GM18951 (cell line): ENCODE measurements at regions of chr1 and their contacts with region 1.

Region 1: GRCh38 chr1:115717541-115717940 is 51.0 kb downstream of the CASQ2 start:
- POLR2A ChIP-seq: no peak

Region 2: DNA sequence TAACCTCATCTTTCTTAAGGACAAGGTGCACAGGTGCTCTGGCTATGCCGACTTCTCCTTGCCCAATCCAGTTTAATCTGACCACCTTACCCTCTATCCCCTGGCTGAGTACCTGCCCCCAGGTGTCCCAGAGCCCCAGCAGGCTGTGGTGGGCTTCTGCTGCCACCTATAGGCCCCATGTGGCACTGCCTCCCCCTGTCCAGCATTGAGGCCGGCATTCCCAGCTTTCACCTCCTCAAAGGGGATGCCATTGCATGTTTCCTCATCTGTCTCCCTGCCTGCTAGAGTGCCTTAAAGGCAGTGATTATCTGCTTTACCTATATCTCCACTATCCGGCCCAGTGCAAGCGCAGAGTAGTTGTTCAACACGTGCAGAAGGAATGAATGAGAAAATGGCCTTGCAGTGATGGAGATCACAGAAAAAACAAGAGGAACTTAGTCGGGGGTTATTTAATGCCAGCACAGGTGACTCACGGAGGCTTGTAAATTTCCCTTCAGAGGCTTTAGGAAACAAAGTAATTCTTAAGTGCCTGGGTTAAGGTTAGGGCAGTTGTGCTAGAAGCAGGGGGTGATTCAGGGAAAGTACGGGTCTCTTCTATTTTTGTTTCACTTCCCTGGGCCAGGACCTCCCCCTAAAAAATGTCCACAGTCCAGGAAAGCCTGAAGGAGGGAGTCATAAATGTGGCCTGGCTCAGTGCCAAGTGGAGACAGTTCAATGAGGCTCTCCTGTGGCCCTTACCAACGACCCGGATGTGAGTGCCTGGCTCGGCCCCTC is 247.7 kb before region 1 on chr1:
- in situ Hi-C with region 1: no loop called
- POLR2A ChIP-seq: no peak

Region 3: DNA sequence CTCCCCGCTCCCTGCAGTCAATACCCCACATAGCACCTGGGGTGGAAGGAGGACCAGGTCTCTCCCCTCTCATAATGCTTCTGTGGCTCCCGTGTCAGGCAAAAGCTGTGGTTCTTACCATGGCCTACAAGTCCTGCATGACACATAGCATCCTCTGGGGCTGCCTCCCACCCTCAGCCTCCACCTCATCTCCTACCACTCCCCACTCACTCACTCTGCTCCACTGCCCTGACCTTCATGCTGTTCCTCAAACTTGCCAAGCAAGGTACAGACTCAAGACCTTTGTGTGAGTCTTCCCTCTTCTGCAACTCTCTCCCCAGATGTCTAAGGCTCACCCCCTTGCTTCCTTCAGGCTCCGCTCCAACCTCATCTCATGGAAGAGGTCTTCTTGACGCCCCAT is 103.8 kb before region 1 on chr1:
- in situ Hi-C with region 1: loop called (anchors 10 kb)
- POLR2A ChIP-seq: no peak

Region 4: DNA sequence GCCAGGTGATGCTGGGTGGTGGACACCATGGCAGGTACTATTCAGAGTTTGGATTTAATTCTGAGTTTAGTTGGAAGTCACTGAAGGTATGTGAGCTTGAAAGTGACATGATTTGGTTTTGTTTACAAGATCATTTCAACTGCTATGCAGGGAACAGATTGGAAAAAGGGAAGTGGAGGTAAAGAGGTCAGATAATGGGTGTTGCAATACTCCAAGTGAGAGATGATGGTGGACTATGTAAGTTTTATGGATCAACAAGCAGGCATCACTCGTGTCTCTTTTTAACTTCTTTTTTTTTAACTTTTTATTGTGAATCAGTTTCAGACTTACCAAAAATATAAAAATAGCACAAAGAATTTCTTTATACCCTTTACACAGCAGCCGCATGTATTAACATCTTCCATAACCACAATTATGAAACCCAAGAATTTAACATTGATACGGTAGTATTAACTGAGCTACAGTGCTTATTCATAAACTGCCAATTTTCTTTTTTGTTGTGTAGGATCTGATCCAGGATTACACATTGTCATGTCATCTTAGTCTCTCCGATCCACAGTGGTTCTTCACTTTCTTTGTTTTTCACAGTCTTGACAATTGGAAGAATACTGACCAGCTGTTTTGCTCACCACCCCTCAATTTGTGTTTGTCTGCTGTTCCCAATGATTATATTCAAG is 148.3 kb after region 1 on chr1:
- in situ Hi-C with region 1: no loop called
- POLR2A ChIP-seq: no peak